A673 (cell line): ENCODE measurements at regions of chr21 and their contacts with region 1.

Region 1: DNA sequence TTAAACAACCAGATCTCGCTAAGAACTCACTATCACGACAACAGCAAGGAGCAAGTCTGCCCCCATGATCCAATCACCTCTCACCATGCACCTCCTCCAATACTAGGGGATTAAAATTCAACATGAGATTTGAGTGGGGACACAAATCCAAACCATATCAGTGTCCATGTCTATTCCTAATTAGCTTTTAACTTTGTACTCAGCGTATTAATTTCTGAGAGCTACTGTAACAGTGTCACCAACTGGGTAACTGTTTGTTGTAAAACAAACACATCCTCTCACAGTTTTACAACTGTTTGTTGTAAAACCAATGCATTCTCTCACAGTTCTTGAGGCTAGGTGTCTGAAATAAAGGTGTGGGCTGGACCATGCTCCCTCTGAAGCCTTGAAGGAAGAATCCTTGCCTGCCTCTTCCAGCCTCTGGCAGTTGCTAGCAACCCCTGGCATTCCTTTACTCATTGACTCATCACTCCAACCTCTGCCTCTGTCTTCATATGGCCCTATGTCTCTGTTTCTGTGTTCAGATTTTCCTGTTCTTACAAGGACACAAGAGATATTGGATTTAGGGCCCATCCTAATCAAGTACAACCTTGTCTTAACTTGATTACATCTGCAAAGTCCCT is 121.2 kb downstream of the LTN1 start:
- DNase-seq: no peak
- H3K4me3 ChIP-seq: no peak overlapping the region
- H3K27ac ChIP-seq: no peak overlapping the region
- H3K4me1 ChIP-seq: no peaks in the 10 kb centered on the region
- H3K27me3 ChIP-seq: no peaks in the 10 kb centered on the region
- CTCF ChIP-seq: peak; percentile 34

Region 2: DNA sequence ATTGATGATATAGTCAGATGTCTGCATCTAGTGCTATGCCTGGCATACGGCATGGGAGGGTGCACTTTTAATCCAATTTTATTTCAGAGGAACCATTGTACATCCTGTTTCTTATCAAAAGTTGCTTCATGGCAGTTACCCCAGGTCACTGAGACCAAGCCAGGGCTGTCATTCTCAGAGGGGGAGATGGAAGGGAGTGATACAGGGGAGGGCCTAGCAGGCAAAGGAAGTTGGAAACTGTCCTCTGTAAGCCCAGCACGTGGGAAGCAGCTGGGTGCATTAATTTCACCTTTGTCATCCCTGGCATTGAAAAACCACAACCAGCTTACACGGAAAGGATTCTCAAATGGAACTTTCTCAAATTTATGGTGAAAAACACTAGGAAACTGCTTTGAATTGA is 1445.9 kb before region 1 on chr21:
- CTCF ChIA-PET with region 1: interaction called, 14 read pairs
- POLR2A ChIA-PET with region 1: no interaction called
- intact Hi-C with region 1: no loop called
- DNase-seq: no peak
- H3K4me3 ChIP-seq: no peak overlapping the region
- H3K27ac ChIP-seq: no peak overlapping the region
- H3K4me1 ChIP-seq: no peaks in the 10 kb centered on the region
- H3K27me3 ChIP-seq: no peaks in the 10 kb centered on the region
- CTCF ChIP-seq: no peak

Region 3: GRCh38 chr21:28357743-28358142 is 513.8 kb before region 1 on chr21:
- CTCF ChIA-PET with region 1: no interaction called
- POLR2A ChIA-PET with region 1: no interaction called
- intact Hi-C with region 1: no loop called
- DNase-seq: no peak
- H3K4me3 ChIP-seq: no peak overlapping the region
- H3K27ac ChIP-seq: no peak overlapping the region
- H3K4me1 ChIP-seq: no peaks in the 10 kb centered on the region
- H3K27me3 ChIP-seq: no peaks in the 10 kb centered on the region
- CTCF ChIP-seq: no peak